Naive thymus-derived CD4-positive, alpha-beta T cell (primary cell): ENCODE measurements at regions of chr6 and their contacts with region 1.

Region 1: DNA sequence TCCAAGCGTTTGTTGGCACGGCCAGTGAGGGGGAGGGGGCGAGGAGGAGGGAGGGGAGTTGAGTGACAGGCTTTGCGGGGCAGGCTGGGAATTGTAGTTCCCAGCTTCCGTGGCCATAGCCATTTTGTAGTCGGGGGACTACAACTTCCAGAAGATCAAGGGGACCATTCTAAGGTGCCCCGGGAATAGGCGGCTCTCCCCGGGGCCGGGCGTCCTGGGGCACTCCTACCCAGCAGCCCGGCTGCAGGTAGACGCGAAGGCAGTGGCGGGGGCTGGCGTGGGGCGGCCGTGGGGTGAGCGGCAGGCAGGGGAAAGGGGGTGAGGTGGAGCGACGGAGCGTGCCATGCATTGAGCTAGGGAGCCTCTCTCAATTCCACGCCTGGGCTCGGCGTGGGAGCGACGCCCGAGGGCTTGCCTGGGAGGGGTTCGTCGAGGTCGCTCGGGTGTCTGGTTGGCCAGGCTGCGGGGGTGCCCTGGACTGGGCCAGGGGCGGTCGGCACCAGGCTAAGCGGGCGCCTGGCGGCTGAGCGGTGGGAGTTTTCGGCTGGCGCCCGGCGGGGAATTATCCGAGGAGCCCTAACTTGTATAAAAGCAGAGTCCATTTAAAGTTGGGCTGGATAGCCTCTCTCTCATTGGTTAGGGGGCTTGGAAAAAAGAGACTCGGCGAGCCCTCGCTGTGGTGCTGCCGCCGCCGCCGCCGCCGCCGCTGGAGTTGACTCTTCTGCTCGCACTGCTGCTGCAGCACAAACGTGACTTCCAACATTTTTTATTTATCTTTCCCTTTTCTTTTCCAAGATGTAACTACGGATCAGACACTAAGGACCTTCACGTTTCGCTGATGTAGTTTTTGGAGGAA is at the start of gene JARID2:
- DNase-seq: peak; percentile 86 to 97 (median 94)
- ATAC-seq: peak; percentile 66
- H3K4me3 ChIP-seq: peak within 1 kb of the TSS; percentile 93
- H3K4me3 Mint-ChIP-seq: peak within 1 kb of the TSS; percentile 94 to 100 (median 99)
- H3K27ac ChIP-seq: peak within 1 kb of the TSS; percentile 93
- H3K27ac Mint-ChIP-seq: peak within 1 kb of the TSS; percentile 94 to 99 (median 97)
- H3K4me1 ChIP-seq: peaks cover 8 to 10% of the 10 kb centered on the region in 2 donors
- H3K4me1 Mint-ChIP-seq: peaks cover 13 to 39% (median 26%) of the 10 kb centered on the region in 7 donors
- H3K27me3 ChIP-seq: no peaks in the 10 kb centered on the region
- H3K27me3 Mint-ChIP-seq: peaks cover 0 to 2% (median 0%) of the 10 kb centered on the region in 5 donors
- total RNA-seq, gene JARID2: 23.4 to 39.6 (median 29.9) TPM

Region 2: GRCh38 chr6:13711733-13712598 is 1533.6 kb before region 1 on chr6 and contains the start of gene RANBP9:
- CTCF ChIA-PET with region 1: no interaction called
- POLR2A ChIA-PET with region 1: no interaction called
- intact Hi-C with region 1: loop called in 1 of 2 experiments (anchors 5 kb)
- DNase-seq: peak; percentile 86 to 92 (median 90)
- ATAC-seq: peak; percentile 90
- H3K4me3 ChIP-seq: peak within 1 kb of the TSS; percentile 85
- H3K4me3 Mint-ChIP-seq: peak within 1 kb of the TSS; percentile 91 to 100 (median 98)
- H3K27ac ChIP-seq: peak within 1 kb of the TSS; percentile 94
- H3K27ac Mint-ChIP-seq: peak within 1 kb of the TSS; percentile 93 to 99 (median 98)
- H3K4me1 ChIP-seq: peaks cover 12 to 15% of the 10 kb centered on the region in 2 donors
- H3K4me1 Mint-ChIP-seq: peaks cover 31 to 58% (median 45%) of the 10 kb centered on the region in 7 donors
- H3K27me3 ChIP-seq: no peaks in the 10 kb centered on the region
- H3K27me3 Mint-ChIP-seq: no peaks in the 10 kb centered on the region
- total RNA-seq, gene RANBP9: 45.4 to 56.9 (median 49.2) TPM

Region 3: GRCh38 chr6:14452567-14453527 is 792.7 kb before region 1 on chr6:
- CTCF ChIA-PET with region 1: no interaction called
- POLR2A ChIA-PET with region 1: no interaction called
- intact Hi-C with region 1: loop called (anchors 5 to 10 kb)
- DNase-seq: peak in 8 of 9 donors; percentile 22 to 66 (median 50)
- ATAC-seq: peak; percentile 77
- H3K4me3 ChIP-seq: peak overlapping the region; percentile 35
- H3K4me3 Mint-ChIP-seq: peak overlapping the region; percentile 56 to 81 (median 72)
- H3K27ac ChIP-seq: no peak overlapping the region
- H3K27ac Mint-ChIP-seq: peak overlapping the region; percentile 33 to 82 (median 68)
- H3K4me1 ChIP-seq: peaks cover 23 to 41% of the 10 kb centered on the region in 2 donors
- H3K4me1 Mint-ChIP-seq: peaks cover 45 to 73% (median 64%) of the 10 kb centered on the region in 7 donors
- H3K27me3 ChIP-seq: no peaks in the 10 kb centered on the region
- H3K27me3 Mint-ChIP-seq: no peaks in the 10 kb centered on the region

Region 4: GRCh38 chr6:14876778-14877613 is 368.6 kb before region 1 on chr6:
- CTCF ChIA-PET with region 1: no interaction called
- POLR2A ChIA-PET with region 1: no interaction called
- intact Hi-C with region 1: loop called (anchors 1 to 5 kb)
- DNase-seq: peak in 8 of 9 donors; percentile 1 to 65 (median 34)
- ATAC-seq: peak; percentile 88
- H3K4me3 ChIP-seq: peak overlapping the region; percentile 25
- H3K4me3 Mint-ChIP-seq: peak overlapping the region; percentile 52 to 80 (median 66)
- H3K27ac ChIP-seq: peak overlapping the region; percentile 2
- H3K27ac Mint-ChIP-seq: peak overlapping the region; percentile 43 to 92 (median 79)
- H3K4me1 ChIP-seq: peaks cover 15 to 16% of the 10 kb centered on the region in 2 donors
- H3K4me1 Mint-ChIP-seq: peaks cover 26 to 55% (median 35%) of the 10 kb centered on the region in 7 donors
- H3K27me3 ChIP-seq: no peaks in the 10 kb centered on the region
- H3K27me3 Mint-ChIP-seq: no peaks in the 10 kb centered on the region

Region 5: GRCh38 chr6:15299430-15300131 is 54.0 kb after region 1 on chr6:
- CTCF ChIA-PET with region 1: no interaction called
- POLR2A ChIA-PET with region 1: interaction called, 3 read pairs
- intact Hi-C with region 1: loop called in 1 of 2 experiments (anchors 2 kb)
- DNase-seq: no peak
- ATAC-seq: peak; percentile 78
- H3K4me3 ChIP-seq: no peak overlapping the region
- H3K4me3 Mint-ChIP-seq: peak overlapping the region; percentile 7 to 58 (median 31)
- H3K27ac ChIP-seq: no peak overlapping the region
- H3K27ac Mint-ChIP-seq: peak overlapping the region in 7 of 9 donors; percentile 5 to 80 (median 69)
- H3K4me1 ChIP-seq: peaks cover 34 to 44% of the 10 kb centered on the region in 2 donors
- H3K4me1 Mint-ChIP-seq: peaks cover 65 to 87% (median 76%) of the 10 kb centered on the region in 7 donors
- H3K27me3 ChIP-seq: no peaks in the 10 kb centered on the region
- H3K27me3 Mint-ChIP-seq: no peaks in the 10 kb centered on the region

Region 6: GRCh38 chr6:15420959-15421438 is 175.4 kb after region 1 on chr6:
- CTCF ChIA-PET with region 1: no interaction called
- POLR2A ChIA-PET with region 1: no interaction called
- intact Hi-C with region 1: loop called in 1 of 2 experiments (anchors 1 kb)
- DNase-seq: peak in 4 of 9 donors; percentile 24 to 41 (median 28)
- ATAC-seq: peak; percentile 80
- H3K4me3 ChIP-seq: peak overlapping the region; percentile 9
- H3K4me3 Mint-ChIP-seq: peak overlapping the region; percentile 3 to 86 (median 69)
- H3K27ac ChIP-seq: peak overlapping the region; percentile 23
- H3K27ac Mint-ChIP-seq: peak overlapping the region; percentile 63 to 93 (median 87)
- H3K4me1 ChIP-seq: peaks cover 17 to 31% of the 10 kb centered on the region in 2 donors
- H3K4me1 Mint-ChIP-seq: peaks cover 37 to 65% (median 57%) of the 10 kb centered on the region in 7 donors
- H3K27me3 ChIP-seq: no peaks in the 10 kb centered on the region
- H3K27me3 Mint-ChIP-seq: no peaks in the 10 kb centered on the region

Region 7: DNA sequence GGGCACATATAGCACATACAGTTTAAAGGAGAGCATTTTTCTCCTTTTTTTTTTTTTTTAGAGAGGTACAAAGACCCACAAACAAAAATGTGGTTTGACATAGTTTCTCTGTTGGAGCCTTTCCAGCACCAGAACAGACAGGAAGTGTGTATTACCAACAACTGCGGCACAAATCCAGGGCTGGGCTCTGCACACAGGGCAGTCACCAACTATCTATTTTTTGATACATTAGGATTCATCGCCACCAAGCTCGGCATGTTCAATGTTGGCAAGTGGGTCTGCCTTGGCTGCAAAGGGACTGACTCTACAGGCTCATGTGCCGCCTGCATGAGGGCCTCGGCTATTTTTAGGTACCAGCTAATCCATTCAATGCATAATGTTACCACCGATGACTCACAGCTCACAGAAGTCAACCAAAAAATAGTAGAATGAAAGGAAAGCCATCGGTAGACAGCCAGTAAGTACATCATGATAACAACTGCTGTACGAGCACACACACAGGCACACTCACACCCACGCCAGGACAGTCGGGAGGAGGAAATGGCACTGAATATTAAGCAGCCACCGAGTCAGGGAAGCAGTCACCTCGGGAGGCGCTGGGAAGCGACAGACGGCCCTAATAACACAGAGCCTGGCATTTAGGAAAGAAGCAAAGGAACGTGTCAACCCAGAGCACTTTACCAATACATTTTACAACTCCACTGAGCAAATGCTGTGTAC is 1074.4 kb after region 1 on chr6:
- CTCF ChIA-PET with region 1: no interaction called
- POLR2A ChIA-PET with region 1: no interaction called
- intact Hi-C with region 1: loop called in 1 of 2 experiments (anchors 5 kb)
- DNase-seq: peak; percentile 33 to 91 (median 79)
- ATAC-seq: peak; percentile 70
- H3K4me3 ChIP-seq: peak overlapping the region; percentile 43
- H3K4me3 Mint-ChIP-seq: peak overlapping the region; percentile 67 to 86 (median 78)
- H3K27ac ChIP-seq: peak overlapping the region; percentile 84
- H3K27ac Mint-ChIP-seq: peak overlapping the region; percentile 91 to 97 (median 95)
- H3K4me1 ChIP-seq: peaks cover 58 to 72% of the 10 kb centered on the region in 2 donors
- H3K4me1 Mint-ChIP-seq: peaks cover 41 to 78% (median 74%) of the 10 kb centered on the region in 7 donors
- H3K27me3 ChIP-seq: no peaks in the 10 kb centered on the region
- H3K27me3 Mint-ChIP-seq: no peaks in the 10 kb centered on the region